ENCODE measurements at regions of chr5 and their contacts with region 1.

Region 1: GRCh38 chr5:69369369-69370121 is at the starts of genes AK6, RAD17 and TAF9:
- DNase-seq: peak; percentile 94
- H3K4me3 Mint-ChIP-seq: peak within 1 kb of the TSS; percentile 98
- H3K27ac Mint-ChIP-seq: peak within 1 kb of the TSS; percentile 97
- H3K4me1 Mint-ChIP-seq: peaks cover 44% of the 10 kb centered on the region
- H3K27me3 Mint-ChIP-seq: no peaks in the 10 kb centered on the region
- total RNA-seq, gene AK6: 79.8 to 87.0 TPM
- total RNA-seq, gene RAD17: 26.9 to 31.9 TPM
- total RNA-seq, gene TAF9: 55.8 to 58.3 TPM

Region 2: DNA sequence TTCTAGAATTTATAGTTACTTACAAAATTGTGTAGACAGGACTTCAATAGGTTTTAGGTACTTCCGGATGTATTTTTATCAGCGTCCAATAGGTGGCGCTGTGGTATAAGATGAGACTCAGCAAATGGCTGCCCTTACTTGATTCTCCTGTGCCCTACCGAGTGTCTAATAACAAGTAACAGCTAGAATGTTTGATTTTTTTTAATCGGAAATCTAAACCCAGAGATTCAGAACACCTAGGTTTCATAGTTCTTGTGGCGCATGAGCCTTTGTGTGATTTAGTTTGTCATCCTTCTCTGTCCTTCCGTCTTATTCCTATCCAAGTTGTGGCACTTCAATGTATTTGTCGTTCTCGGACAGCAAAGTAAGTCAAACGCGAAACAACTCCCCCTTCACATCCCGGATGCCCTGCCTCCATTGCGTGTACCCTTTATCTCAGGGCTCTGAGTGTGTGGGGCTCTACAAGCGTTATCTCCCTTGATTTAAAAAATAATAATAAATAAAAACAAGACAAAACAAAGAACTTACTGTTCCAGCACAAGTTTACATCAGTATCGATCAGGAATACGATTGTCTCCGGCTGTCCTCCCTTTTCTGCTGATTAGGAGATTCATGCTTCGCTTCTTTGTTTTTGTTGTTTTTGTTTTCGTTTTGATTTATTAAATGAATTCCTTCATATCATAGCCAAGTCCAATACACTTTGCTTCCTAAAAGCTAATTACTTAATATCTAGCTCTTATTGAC is 326.5 kb before region 1 on chr5:
- CTCF ChIA-PET with region 1: interaction called, 3 read pairs
- POLR2A ChIA-PET with region 1: no interaction called
- intact Hi-C with region 1: loop called (anchors 2 kb)
- DNase-seq: peak; percentile 82
- H3K4me3 Mint-ChIP-seq: peak overlapping the region; percentile 70
- H3K27ac Mint-ChIP-seq: peak overlapping the region; percentile 76
- H3K4me1 Mint-ChIP-seq: peaks cover 8% of the 10 kb centered on the region
- H3K27me3 Mint-ChIP-seq: no peaks in the 10 kb centered on the region

Region 3: GRCh38 chr5:69189162-69190086 is 180.1 kb before region 1 on chr5 and contains the start of gene CENPH:
- CTCF ChIA-PET with region 1: no interaction called
- POLR2A ChIA-PET with region 1: no interaction called
- intact Hi-C with region 1: loop called (anchors 1 kb)
- DNase-seq: peak; percentile 96
- H3K4me3 Mint-ChIP-seq: peak within 1 kb of the TSS; percentile 90
- H3K27ac Mint-ChIP-seq: peak within 1 kb of the TSS; percentile 89
- H3K4me1 Mint-ChIP-seq: peaks cover 6% of the 10 kb centered on the region
- H3K27me3 Mint-ChIP-seq: no peaks in the 10 kb centered on the region
- total RNA-seq, gene CENPH: 80.7 to 82.0 TPM

Region 4: GRCh38 chr5:69217548-69218526 is 151.7 kb before region 1 on chr5:
- CTCF ChIA-PET with region 1: no interaction called
- POLR2A ChIA-PET with region 1: no interaction called
- intact Hi-C with region 1: loop called (anchors 1 kb)
- DNase-seq: peak; percentile 96
- H3K4me3 Mint-ChIP-seq: peak overlapping the region; percentile 97
- H3K27ac Mint-ChIP-seq: peak overlapping the region; percentile 93
- H3K4me1 Mint-ChIP-seq: peaks cover 15% of the 10 kb centered on the region
- H3K27me3 Mint-ChIP-seq: no peaks in the 10 kb centered on the region

Region 5: GRCh38 chr5:69234457-69235268 is 134.9 kb before region 1 on chr5 and contains the start of gene CDK7:
- CTCF ChIA-PET with region 1: no interaction called
- POLR2A ChIA-PET with region 1: interaction called, 5 read pairs
- intact Hi-C with region 1: loop called (anchors 1 kb)
- DNase-seq: peak; percentile 96
- H3K4me3 Mint-ChIP-seq: peak within 1 kb of the TSS; percentile 98
- H3K27ac Mint-ChIP-seq: peak within 1 kb of the TSS; percentile 81
- H3K4me1 Mint-ChIP-seq: peaks cover 36% of the 10 kb centered on the region
- H3K27me3 Mint-ChIP-seq: no peaks in the 10 kb centered on the region
- total RNA-seq, gene CDK7: 36.2 to 41.2 TPM

Region 6: DNA sequence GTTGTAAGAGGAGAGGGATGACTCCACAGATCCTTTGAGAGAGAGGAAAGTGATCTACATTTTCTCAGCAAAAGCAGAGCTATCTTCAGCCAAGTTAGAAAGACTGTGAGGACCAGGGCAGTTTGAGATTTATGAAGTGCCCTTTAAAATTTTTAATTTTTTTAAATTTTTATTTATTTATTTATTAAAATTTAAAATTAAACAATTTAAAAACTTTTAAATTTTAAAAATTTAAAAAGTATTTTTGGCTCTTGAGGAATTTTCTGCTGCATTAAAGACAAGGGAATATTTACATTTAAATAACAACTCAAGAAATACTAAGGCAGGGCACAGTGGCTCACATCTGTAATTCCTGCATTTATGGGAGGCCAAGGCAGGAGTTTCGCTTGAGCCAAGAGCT is 92.6 kb after region 1 on chr5:
- CTCF ChIA-PET with region 1: no interaction called
- POLR2A ChIA-PET with region 1: no interaction called
- intact Hi-C with region 1: no loop called
- DNase-seq: no peak
- H3K4me3 Mint-ChIP-seq: no peak overlapping the region
- H3K27ac Mint-ChIP-seq: no peak overlapping the region
- H3K4me1 Mint-ChIP-seq: no peaks in the 10 kb centered on the region
- H3K27me3 Mint-ChIP-seq: peaks cover 3% of the 10 kb centered on the region

Measured in activated CD4-positive, alpha-beta memory T cell treated with anti-CD3 and anti-CD28 coated beads for 36 hours (primary cell).